ENCODE measurements at regions of chr4 and their contacts with region 1.

Region 1: GRCh38 chr4:65865489-65865888 is 195.2 kb upstream of the EPHA5 start:
- DNase-seq: peak; percentile 13
- ATAC-seq: peak; percentile 49; the same call in 1 of the 3 replicates
- H3K4me3 ChIP-seq: no peak overlapping the region
- H3K27ac ChIP-seq: no peak overlapping the region
- H3K4me1 ChIP-seq: no peaks in the 10 kb centered on the region
- H3K27me3 ChIP-seq: no peaks in the 10 kb centered on the region
- CTCF ChIP-seq: peak; percentile 38
- EP300 ChIP-seq: no peak
- POLR2A ChIP-seq: no peak
- RAD21 ChIP-seq: no peak; the same call in 1 of the 2 replicates

Region 2: GRCh38 chr4:65007841-65008439 is 857.5 kb before region 1 on chr4:
- CTCF ChIA-PET with region 1: no interaction called
- POLR2A ChIA-PET with region 1: no interaction called
- in situ Hi-C with region 1: no loop called
- intact Hi-C with region 1: loop called (anchors 5 kb)
- DNase-seq: peak; percentile 47
- ATAC-seq: peak; percentile 66
- H3K4me3 ChIP-seq: no peak overlapping the region
- H3K27ac ChIP-seq: no peak overlapping the region
- H3K4me1 ChIP-seq: no peaks in the 10 kb centered on the region
- H3K27me3 ChIP-seq: no peaks in the 10 kb centered on the region
- CTCF ChIP-seq: peak; percentile 38
- EP300 ChIP-seq: no peak
- POLR2A ChIP-seq: no peak
- RAD21 ChIP-seq: no peak

Region 3: DNA sequence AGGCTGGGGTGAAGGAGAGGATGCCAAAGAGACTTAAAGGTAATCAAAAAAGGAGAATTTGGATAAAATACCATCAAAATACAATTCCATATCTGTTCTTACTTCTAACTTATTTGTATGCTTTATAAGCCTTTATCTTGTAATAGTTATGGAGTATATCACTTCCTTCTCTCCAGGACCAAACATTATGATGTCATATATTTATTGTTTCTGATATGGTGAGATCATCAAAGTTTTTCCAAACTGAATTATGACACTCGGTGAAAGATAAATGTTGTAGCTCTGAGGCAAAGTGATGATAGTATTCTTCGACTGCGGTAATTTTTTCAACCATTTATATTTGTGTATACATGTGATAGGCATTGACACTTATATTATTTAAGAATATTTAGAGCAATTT is 836.9 kb before region 1 on chr4:
- CTCF ChIA-PET with region 1: no interaction called
- POLR2A ChIA-PET with region 1: no interaction called
- in situ Hi-C with region 1: no loop called
- intact Hi-C with region 1: loop called (anchors 5 kb)
- DNase-seq: no peak
- ATAC-seq: no peak
- H3K4me3 ChIP-seq: no peak overlapping the region
- H3K27ac ChIP-seq: no peak overlapping the region
- H3K4me1 ChIP-seq: no peaks in the 10 kb centered on the region
- H3K27me3 ChIP-seq: no peaks in the 10 kb centered on the region
- CTCF ChIP-seq: no peak
- EP300 ChIP-seq: no peak
- POLR2A ChIP-seq: no peak
- RAD21 ChIP-seq: no peak

Measured in HepG2 (cell line).